Dendritic cell treated with granulocyte-macrophage colony-stimulating factor and Interleukin-4, amounts not matched to agents 40 ng/mL and 50 ng/mL, for 4 days (primary cell): ENCODE measurements at regions of chr15 and their contacts with region 1.

Region 1: DNA sequence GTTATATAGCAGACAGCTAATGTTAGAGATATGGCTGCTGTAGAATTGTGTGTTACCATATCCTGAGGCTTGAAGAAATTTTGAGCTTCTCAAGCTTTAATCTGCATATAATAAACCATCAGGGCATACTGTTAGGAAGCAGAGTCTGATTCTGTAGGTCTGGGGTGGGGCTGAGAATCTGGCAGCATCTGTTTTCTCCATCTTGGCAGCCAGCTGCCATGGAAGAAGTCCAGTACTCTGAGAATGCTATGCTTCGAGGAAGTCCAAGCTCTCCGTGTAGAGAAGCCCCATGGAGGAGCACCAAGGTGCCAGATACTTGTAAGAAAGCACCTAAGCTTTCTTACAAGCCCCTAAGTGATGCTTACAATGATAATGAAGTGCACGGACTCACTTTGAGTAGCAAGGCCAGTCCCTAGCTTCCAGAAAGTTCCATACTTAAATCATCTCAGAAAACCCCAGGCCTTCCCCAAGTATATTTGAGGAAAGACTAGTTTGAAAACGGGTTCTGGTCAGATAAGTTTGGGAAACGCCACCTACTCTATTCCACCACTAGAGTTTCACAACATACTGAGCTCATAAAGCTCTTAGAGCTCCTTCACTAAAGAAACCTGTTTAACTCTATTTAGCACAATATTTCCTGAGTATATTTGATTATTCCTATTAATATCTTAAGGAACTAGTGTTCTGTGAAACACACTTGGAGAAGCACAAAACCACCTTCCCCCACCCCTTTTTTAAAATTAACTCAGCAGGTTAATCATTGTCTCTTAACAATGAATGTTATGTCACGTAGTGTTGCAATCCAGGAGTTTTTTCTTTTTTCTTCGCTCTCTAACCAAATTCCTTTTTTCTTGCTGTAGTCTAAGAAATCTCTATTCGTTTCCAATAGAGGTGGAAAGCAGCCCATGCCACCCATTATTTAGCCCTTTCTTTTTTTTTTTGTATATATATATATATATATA is 59.9 kb upstream of the RASGRP1 start:
- H3K4me3 Mint-ChIP-seq: no peak overlapping the region
- H3K27ac Mint-ChIP-seq: peak overlapping the region; percentile 32
- H3K4me1 Mint-ChIP-seq: peaks cover 65% of the 10 kb centered on the region
- H3K27me3 Mint-ChIP-seq: peaks cover 5% of the 10 kb centered on the region

Region 2: DNA sequence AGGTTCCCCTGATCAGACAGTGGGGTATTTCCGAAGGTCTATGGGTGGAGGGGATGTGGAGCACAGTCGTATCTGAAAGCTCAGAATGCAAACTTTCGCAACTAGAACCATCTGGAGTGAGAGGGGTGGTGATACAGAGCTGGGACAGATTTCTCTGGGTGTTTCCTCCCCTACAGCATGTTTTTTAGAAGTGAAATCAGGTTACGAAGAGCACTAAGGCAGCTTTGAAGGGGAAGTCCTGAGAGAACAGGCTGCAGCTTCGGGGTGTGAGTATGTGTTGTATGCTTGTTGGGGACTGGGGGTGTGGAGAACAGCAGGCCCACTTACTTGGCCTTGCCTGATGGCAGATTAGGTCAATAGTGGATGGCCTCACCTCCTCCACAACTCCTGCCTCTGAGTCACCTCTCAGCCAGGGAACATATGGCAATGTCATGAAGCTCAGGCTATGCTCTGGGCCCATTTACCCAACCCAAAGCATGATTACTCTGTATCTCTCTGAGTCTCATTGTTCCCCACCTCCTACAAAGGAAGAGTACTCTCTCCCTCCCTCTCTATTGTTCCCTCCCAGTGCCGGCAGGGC is 47.2 kb after region 1 on chr15:
- intact Hi-C with region 1: loop called (anchors 10 kb)
- H3K4me3 Mint-ChIP-seq: peak overlapping the region; percentile 37
- H3K27ac Mint-ChIP-seq: peak overlapping the region; percentile 74
- H3K4me1 Mint-ChIP-seq: peaks cover 59% of the 10 kb centered on the region
- H3K27me3 Mint-ChIP-seq: peaks cover 4% of the 10 kb centered on the region

Region 3: DNA sequence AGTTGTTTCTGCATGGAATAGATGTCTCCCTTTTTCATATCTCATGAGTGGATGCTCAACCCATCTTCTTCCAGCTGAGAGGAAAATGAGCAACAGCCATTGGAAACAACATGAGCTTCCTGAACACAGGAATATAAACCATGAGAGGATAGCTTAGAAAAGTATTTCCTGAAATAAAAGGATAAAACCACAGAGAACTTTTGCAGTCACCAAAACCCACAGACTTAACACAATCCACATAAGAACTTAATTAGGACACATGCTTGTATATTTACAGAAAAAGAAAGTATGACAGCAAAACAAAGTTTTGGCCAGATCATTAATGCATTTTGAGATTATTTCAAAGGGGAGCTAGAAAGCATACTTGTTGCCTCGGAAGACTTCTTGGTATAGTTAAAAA is 120.6 kb after region 1 on chr15:
- intact Hi-C with region 1: no loop called
- H3K4me3 Mint-ChIP-seq: no peak overlapping the region
- H3K27ac Mint-ChIP-seq: no peak overlapping the region
- H3K4me1 Mint-ChIP-seq: peaks cover 18% of the 10 kb centered on the region
- H3K27me3 Mint-ChIP-seq: peaks cover 4% of the 10 kb centered on the region